ENCODE measurements at regions of chr17 and their contacts with region 1.

Region 1: DNA sequence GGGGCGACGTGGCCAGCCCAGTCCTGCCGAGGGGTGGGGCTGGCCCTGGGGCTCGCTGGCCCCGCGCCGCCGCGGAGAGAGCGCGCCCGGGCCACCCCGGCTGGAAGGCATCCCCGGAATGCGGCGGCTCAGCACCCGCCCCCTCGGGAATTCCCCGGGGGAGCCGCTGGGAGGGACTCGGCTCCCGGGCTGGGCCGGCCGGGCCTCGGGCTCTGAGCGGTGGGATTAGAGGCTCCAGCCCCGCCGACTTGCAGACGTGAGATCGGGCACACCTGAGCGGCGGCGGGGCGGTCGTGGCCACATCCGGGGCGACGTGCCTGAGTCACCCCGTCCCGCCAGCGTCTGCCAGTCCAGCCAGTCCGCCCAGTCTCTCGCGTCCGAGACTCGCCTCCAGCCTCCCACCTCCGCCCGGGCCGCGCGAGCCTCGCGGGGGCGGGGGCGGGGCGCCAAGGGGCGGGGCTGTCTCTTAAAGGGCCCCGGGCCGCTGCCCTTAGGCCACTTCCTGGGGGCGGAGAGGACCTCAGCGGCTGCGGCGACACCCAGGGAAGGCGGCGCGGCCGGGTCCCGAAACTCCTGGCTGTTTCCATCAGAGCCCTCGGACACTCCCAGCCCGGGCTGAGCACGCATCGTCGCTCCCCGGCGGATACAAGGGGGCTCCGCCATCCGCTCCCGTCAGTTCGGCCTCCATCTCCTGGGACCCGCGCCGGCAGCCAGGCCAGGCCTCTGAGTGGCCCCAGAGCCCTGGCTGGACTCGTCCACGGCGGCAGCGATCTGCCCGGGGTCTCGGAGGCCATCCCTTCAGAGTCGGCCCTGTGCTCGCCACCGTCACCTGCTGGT is at the start of gene KCTD11:
- DNase-seq: peak; percentile 62
- H3K4me3 ChIP-seq: peak within 1 kb of the TSS; percentile 96
- CTCF ChIP-seq: peak; percentile 75

Region 2: GRCh38 chr17:7056386-7056785 is 295.5 kb before region 1 on chr17:
- CTCF ChIA-PET with region 1: no interaction called
- POLR2A ChIA-PET with region 1: no interaction called
- DNase-seq: no peak
- H3K4me3 ChIP-seq: no peak overlapping the region
- CTCF ChIP-seq: no peak

Region 3: GRCh38 chr17:7329374-7329996 is 22.4 kb before region 1 on chr17:
- CTCF ChIA-PET with region 1: interaction called, 34 read pairs
- POLR2A ChIA-PET with region 1: interaction called, 9 read pairs
- DNase-seq: peak; percentile 96
- H3K4me3 ChIP-seq: peak overlapping the region; percentile 96
- CTCF ChIP-seq: no peak

Region 4: GRCh38 chr17:7363311-7363710 is 11.4 kb after region 1 on chr17:
- CTCF ChIA-PET with region 1: interaction called, 42 read pairs
- POLR2A ChIA-PET with region 1: no interaction called
- DNase-seq: no peak
- H3K4me3 ChIP-seq: no peak overlapping the region
- CTCF ChIP-seq: no peak

Region 5: DNA sequence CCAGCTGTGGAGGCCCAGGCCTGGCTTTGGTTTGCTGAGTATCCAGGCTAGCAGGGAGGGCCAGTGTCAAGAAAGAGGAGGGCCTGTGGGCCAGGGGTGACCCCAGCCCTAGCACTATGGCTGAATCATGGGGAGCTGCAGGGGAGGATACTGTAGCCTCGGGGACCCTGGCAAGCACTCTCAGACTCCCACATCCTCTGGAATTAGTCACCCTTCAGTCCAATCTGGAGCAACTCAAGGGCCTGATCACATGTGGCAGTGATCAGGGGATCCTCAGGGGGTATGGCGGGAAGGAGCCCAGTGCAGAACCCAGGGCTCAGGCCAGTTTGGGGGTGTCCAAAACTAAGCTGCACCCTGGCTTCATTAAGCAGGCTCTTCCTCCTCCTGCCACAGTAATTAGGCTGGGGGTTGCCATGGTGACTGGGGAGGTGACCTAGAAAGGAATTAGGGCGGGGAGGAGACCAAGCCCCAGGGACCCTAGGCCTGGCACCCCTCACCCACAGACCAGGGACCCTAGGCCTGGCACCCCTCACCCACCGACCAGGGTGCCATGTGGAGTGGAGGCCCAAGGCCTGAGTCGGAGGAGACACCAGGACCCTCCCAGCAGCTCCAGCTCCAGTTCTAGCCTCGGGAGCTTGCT is 61.6 kb after region 1 on chr17:
- CTCF ChIA-PET with region 1: no interaction called
- POLR2A ChIA-PET with region 1: no interaction called
- DNase-seq: no peak
- H3K4me3 ChIP-seq: no peak overlapping the region
- CTCF ChIP-seq: no peak

Region 6: GRCh38 chr17:7435221-7435675 is 83.4 kb after region 1 on chr17 and contains the start of gene TMEM102:
- CTCF ChIA-PET with region 1: interaction called, 52 read pairs
- POLR2A ChIA-PET with region 1: no interaction called
- DNase-seq: peak; percentile 40
- H3K4me3 ChIP-seq: peak within 1 kb of the TSS; percentile 56
- CTCF ChIP-seq: no peak

Region 7: GRCh38 chr17:7484067-7484918 is 132.4 kb after region 1 on chr17 and contains the start of gene POLR2A:
- CTCF ChIA-PET with region 1: interaction called, 10 read pairs
- POLR2A ChIA-PET with region 1: interaction called, 11 read pairs
- DNase-seq: peak; percentile 87
- H3K4me3 ChIP-seq: peak within 1 kb of the TSS; percentile 87
- CTCF ChIP-seq: no peak

Measured in AG04449 (cell line).